Dendritic cell treated with granulocyte-macrophage colony-stimulating factor and Interleukin-4, amounts not matched to agents 40 ng/mL and 50 ng/mL, for 4 days (primary cell): ENCODE measurements at regions of chr7 and their contacts with region 1.

Region 1: DNA sequence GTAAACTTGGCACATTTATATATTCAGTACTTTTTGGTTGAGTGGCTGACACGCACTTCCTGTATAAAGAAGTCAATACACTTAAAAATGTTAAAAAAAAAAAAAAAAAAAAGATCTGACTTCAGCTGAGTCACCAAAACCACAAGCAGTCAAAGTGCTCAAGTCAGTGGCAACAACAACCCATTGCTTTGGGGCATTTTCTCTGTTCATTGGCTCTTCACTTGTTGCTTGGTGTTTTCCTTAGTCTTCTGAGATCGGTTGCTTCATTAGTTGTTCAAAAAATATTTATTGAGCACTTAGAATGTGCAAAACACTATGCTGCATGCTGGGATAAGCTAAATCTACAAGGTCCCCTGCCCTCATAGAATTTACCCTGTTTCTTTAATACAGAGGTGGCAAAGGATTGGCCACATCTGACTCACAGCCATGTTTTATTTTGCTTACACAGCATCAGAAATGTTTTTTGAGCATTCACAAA is 63.7 kb downstream of the ZNRF2 start:
- H3K4me3 Mint-ChIP-seq: peak overlapping the region; percentile 32
- H3K27ac Mint-ChIP-seq: peak overlapping the region; percentile 79
- H3K4me1 Mint-ChIP-seq: peaks cover 33% of the 10 kb centered on the region
- H3K27me3 Mint-ChIP-seq: no peaks in the 10 kb centered on the region

Region 2: DNA sequence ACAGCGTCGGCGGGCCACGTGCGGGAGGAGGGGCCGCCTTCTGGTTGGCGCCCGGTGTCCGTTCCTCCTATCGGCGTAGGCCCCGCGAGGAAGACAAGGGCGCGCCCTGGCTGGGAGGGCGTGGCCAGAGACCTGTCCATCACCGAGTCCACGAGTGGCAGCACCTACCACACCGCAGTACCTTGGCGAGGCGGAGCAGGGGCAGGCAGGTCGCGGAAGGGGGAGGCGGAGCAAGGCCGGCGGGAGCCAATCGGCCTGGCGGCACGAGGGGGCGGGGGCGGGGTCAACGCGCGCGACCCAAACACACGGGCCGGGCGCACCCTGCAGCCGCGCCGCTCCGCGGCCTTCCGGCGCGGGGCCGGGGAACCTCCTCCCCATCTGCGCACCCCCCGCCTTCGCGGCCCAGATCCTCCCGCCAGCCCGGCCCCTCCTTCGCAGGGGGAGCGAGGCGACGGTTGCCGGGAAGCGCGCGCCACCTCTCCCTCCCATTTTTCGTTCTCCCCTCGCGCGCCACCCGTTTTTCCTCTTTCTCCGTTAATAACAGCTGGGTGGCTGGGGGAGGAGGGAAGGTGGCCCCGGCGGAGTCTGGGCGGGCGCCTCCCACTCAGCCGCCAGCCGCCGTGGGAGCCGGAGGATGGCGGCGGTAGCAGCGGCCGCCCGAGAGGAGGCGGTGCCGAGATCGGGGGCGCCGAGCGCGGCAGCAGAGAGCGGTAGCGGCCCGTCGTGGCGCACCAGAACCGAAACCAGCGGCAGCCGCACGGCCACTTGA is 63.6 kb before region 1 on chr7 and contains the start of gene ZNRF2:
- intact Hi-C with region 1: loop called (anchors 2 kb)
- H3K4me3 Mint-ChIP-seq: peak within 1 kb of the TSS; percentile 90
- H3K27ac Mint-ChIP-seq: peak within 1 kb of the TSS; percentile 92
- H3K4me1 Mint-ChIP-seq: peaks cover 36% of the 10 kb centered on the region
- H3K27me3 Mint-ChIP-seq: no peaks in the 10 kb centered on the region

Region 3: DNA sequence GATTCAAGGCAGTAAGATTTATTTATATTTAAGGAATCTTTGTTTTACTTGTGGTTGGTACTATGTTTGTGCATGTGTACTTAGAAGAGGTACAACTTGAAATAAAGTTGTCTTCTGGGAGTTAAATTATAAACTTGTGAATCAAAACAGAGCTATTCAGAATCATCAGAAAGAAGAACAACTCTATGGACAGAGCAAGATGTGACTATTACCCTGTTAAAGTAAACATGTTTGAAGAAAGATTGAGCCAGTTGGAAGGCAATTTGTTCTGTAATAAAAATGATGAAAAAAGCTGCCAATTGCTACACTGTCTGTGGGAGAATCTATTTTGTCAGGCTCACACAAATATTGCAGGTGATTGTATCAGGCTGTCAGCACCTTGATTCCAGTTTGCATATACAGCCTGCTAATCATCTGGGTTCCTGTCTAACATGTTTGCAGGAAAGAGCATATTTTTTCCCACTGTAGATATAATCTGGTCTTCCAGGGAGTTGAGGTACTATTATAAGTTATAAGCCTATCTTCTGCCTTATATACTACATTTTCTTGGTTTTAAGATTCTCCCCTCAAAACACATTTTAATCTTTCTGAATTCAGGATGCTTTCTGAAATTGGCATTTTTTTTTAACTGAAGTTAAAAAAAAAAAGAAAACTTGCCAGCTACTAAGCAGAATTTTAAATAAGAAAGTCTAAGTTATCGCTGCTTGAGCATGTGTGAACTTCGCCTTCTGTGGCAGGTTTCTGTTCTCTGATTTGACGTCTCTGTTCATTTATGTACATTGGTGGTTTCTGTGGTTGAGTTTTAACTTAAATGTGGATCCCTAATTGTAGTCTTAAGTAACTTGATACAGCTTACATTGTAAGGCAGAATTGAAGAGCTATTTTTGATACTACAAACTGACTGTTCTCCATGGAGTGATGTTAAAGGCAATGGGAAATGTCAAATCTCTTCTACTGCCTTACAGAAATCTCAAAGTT is 17.7 kb before region 1 on chr7:
- intact Hi-C with region 1: loop called (anchors 2 kb)
- H3K4me3 Mint-ChIP-seq: peak overlapping the region; percentile 18
- H3K27ac Mint-ChIP-seq: peak overlapping the region; percentile 71
- H3K4me1 Mint-ChIP-seq: peaks cover 62% of the 10 kb centered on the region
- H3K27me3 Mint-ChIP-seq: no peaks in the 10 kb centered on the region